Activated naive CD4-positive, alpha-beta T cell treated with anti-CD3 and anti-CD28 coated beads for 36 hours (primary cell): ENCODE measurements at regions of chr14 and their contacts with region 1.

Region 1: GRCh38 chr14:69398053-69398817 is at the starts of genes ERH and SLC39A9:
- DNase-seq: peak; percentile 97
- H3K4me3 Mint-ChIP-seq: peak within 1 kb of the TSS; percentile 89
- H3K27ac Mint-ChIP-seq: peak within 1 kb of the TSS; percentile 100
- H3K4me1 Mint-ChIP-seq: peaks cover 66% of the 10 kb centered on the region
- H3K27me3 Mint-ChIP-seq: no peaks in the 10 kb centered on the region
- total RNA-seq, gene ERH: 338 to 348 TPM
- total RNA-seq, gene SLC39A9: 53.4 to 54.5 TPM

Region 2: DNA sequence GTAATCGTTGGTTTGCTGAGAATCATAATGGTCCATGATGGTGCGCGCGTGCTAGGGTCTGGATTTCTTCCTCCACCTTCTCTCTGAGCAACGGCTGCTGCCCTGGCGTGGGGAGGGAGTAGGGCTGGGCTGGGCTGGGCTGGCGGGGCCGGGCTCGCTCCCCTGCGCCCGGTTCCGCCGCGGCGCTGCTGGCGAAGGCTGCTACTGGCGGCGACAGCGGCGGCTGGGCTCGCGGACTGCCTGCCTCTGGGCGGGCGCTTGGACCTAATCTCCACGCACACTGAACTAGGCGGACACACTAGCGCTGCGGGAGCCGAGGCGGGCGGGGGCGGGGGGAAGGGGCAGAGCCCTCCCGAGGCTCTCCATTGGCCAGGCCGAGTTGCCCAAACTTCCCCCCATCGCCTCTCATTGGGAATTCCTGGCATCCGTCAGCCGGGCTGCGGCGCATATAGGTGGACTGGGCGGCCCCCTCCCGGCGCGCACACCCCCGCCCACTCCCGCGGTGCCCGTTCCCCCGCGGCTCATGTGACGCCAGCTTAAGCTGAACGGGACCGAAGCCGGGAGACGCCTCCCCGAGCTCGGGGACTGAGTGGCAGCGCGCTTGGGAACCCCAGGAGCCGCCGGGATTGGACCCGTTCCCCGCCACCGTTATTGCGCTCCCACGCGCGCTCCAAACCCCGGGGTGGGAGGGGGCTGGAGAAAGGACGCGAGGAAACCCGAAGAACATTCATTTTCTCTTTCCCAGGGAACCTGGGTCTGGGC is 419.0 kb before region 1 on chr14 and contains the start of gene ACTN1:
- CTCF ChIA-PET with region 1: no interaction called
- intact Hi-C with region 1: loop called (anchors 5 kb)
- DNase-seq: peak; percentile 89
- H3K4me3 Mint-ChIP-seq: peak within 1 kb of the TSS; percentile 85
- H3K27ac Mint-ChIP-seq: peak within 1 kb of the TSS; percentile 87
- H3K4me1 Mint-ChIP-seq: peaks cover 32% of the 10 kb centered on the region
- H3K27me3 Mint-ChIP-seq: no peaks in the 10 kb centered on the region
- total RNA-seq, gene ACTN1: 79.7 to 80.6 TPM

Region 3: GRCh38 chr14:69153131-69153872 is 244.9 kb before region 1 on chr14:
- CTCF ChIA-PET with region 1: interaction called, 3 read pairs
- intact Hi-C with region 1: loop called (anchors 1 kb)
- DNase-seq: peak; percentile 95
- H3K4me3 Mint-ChIP-seq: peak overlapping the region; percentile 82
- H3K27ac Mint-ChIP-seq: peak overlapping the region; percentile 24
- H3K4me1 Mint-ChIP-seq: peaks cover 31% of the 10 kb centered on the region
- H3K27me3 Mint-ChIP-seq: no peaks in the 10 kb centered on the region

Region 4: GRCh38 chr14:69260861-69261564 is 137.2 kb before region 1 on chr14:
- CTCF ChIA-PET with region 1: no interaction called
- intact Hi-C with region 1: loop called (anchors 2 kb)
- DNase-seq: peak; percentile 60
- H3K4me3 Mint-ChIP-seq: peak overlapping the region; percentile 63
- H3K27ac Mint-ChIP-seq: no peak overlapping the region
- H3K4me1 Mint-ChIP-seq: peaks cover 6% of the 10 kb centered on the region
- H3K27me3 Mint-ChIP-seq: peaks cover 51% of the 10 kb centered on the region

Region 5: GRCh38 chr14:69376439-69376838 is 21.8 kb before region 1 on chr14:
- CTCF ChIA-PET with region 1: no interaction called
- intact Hi-C with region 1: no loop called
- DNase-seq: no peak
- H3K4me3 Mint-ChIP-seq: no peak overlapping the region
- H3K27ac Mint-ChIP-seq: peak overlapping the region; percentile 39
- H3K4me1 Mint-ChIP-seq: peaks cover 18% of the 10 kb centered on the region
- H3K27me3 Mint-ChIP-seq: no peaks in the 10 kb centered on the region

Region 6: DNA sequence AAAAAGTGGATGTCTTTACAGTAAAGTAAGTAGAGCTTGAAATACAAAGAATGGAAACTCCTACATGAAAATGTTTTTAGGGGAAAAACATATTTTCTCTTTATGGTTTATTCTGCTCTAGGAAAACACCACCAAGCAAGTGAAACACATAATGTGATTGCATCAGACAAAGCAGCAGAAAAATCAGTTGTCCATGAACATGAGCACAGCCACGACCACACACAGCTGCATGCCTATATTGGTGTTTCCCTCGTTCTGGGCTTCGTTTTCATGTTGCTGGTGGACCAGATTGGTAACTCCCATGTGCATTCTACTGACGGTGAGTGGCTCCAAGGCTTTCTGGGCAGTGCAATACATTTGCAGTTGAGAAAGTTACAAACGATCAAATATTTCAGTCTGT is 43.7 kb after region 1 on chr14:
- CTCF ChIA-PET with region 1: no interaction called
- intact Hi-C with region 1: loop called (anchors 2 kb)
- DNase-seq: peak; percentile 26
- H3K4me3 Mint-ChIP-seq: peak overlapping the region; percentile 74
- H3K27ac Mint-ChIP-seq: peak overlapping the region; percentile 54
- H3K4me1 Mint-ChIP-seq: peaks cover 18% of the 10 kb centered on the region
- H3K27me3 Mint-ChIP-seq: no peaks in the 10 kb centered on the region

Region 7: DNA sequence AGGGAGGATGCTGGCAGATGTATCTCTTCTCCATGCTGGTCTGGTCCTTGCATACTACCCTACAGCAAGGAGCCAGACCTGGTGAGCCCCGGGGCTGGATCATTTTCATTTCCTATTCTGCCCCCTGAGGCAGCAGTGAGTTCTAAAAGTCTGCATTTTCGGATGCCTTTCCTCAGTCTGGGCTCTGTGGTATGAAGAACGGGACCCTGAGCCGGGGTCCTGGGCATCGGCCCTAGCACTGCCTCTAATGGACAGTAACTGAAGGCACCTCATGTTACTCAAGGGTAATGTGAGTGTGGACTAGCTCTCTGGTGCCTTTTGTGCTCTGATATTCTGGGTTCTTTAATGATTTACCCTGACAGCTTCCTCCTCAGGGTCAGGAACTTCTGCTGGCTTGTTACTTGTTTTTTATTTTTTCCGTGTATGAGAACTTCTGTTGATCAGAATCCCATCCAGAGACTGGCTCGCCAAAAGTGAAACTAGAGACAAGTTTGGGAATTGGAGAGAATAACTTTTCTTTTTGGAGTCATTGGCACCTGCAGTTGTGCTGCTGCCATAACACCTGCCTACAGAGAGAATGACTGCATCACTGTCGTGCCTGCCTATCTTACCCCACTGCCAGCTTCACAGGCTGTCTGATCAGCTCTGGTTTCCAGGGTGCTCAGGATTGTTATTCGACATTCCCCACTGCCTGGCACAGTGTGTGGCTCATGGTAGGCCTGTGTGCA is 275.5 kb after region 1 on chr14:
- CTCF ChIA-PET with region 1: no interaction called
- intact Hi-C with region 1: loop called (anchors 10 kb)
- DNase-seq: peak; percentile 37
- H3K4me3 Mint-ChIP-seq: peak overlapping the region; percentile 49
- H3K27ac Mint-ChIP-seq: peak overlapping the region; percentile 99
- H3K4me1 Mint-ChIP-seq: peaks cover 94% of the 10 kb centered on the region
- H3K27me3 Mint-ChIP-seq: no peaks in the 10 kb centered on the region